Activated T-helper 1 cell treated with anti-CD3 and anti-CD28 coated beads, Interleukin-12 subunit alpha, Interleukin-12 subunit beta, Interleukin-2, Interleukin-4 antibody, amounts not matched to agents 30 ng/mL and 10 ng/mL and 1 ng/mL, durations not matched to agents 14 hours and 24 hours and 36 hours (primary cell): ENCODE measurements at regions of chr5 and their contacts with region 1.

Region 1: DNA sequence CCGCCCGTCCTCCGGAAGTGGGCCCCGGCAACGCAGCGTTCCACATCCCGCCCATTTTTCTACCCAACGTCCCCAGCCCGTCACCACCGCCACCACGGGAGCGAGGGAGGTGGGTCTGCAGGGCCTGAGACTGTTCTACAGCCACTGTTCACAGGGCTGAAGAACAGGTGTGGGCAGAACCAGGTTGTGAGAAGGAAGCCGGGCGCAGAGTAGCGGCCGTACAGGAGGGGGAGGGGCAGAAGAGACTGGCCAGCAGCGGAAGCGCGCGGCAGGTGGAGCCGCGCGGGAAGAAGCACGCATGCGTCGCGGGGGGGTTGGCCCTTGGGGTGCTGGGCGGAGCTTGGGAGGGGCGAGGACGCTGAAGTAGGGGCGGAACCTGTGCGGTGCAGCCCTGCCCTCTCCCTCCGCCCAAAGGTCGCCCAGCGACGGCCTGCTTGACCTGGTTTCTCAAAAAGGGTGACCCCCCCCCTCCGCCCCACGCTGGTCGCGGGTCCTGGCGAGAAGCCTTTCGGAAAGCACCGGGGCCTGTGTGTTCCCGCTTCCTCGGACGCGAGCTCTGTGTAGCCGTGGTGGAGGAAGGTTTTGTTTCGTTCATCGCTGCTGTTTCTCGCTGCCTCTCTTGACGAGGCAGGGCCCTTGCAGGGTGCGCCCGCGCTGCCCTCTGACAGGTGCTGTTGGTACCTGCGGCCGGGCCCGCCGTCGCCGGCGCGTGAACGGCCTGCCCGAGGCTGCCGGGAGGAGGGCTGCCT is 7.8 kb upstream of the MGAT1 start:
- DNase-seq: peak; percentile 91
- H3K4me3 Mint-ChIP-seq: peak overlapping the region; percentile 84
- H3K27ac Mint-ChIP-seq: peak overlapping the region; percentile 99
- H3K4me1 Mint-ChIP-seq: peaks cover 78% of the 10 kb centered on the region
- H3K27me3 Mint-ChIP-seq: peaks cover 2% of the 10 kb centered on the region

Region 2: GRCh38 chr5:180831139-180832048 is 21.0 kb after region 1 on chr5:
- intact Hi-C with region 1: loop called (anchors 1 kb)
- DNase-seq: peak; percentile 76
- H3K4me3 Mint-ChIP-seq: peak overlapping the region; percentile 91
- H3K27ac Mint-ChIP-seq: peak overlapping the region; percentile 99
- H3K4me1 Mint-ChIP-seq: peaks cover 33% of the 10 kb centered on the region
- H3K27me3 Mint-ChIP-seq: no peaks in the 10 kb centered on the region

Region 3: GRCh38 chr5:180860887-180861822 is 50.8 kb after region 1 on chr5 and contains the start of gene ZFP62:
- intact Hi-C with region 1: loop called (anchors 1 kb)
- DNase-seq: peak; percentile 82
- H3K4me3 Mint-ChIP-seq: peak within 1 kb of the TSS; percentile 90
- H3K27ac Mint-ChIP-seq: peak within 1 kb of the TSS; percentile 91
- H3K4me1 Mint-ChIP-seq: peaks cover 18% of the 10 kb centered on the region
- H3K27me3 Mint-ChIP-seq: peaks cover 4% of the 10 kb centered on the region
- total RNA-seq, gene ZFP62: 28.4 and 28.5 TPM in 2 replicates

Region 4: GRCh38 chr5:181181650-181182565 is 371.5 kb after region 1 on chr5:
- intact Hi-C with region 1: loop called (anchors 10 kb)
- DNase-seq: no peak
- H3K4me3 Mint-ChIP-seq: peak overlapping the region; percentile 63
- H3K27ac Mint-ChIP-seq: peak overlapping the region; percentile 64
- H3K4me1 Mint-ChIP-seq: peaks cover 22% of the 10 kb centered on the region
- H3K27me3 Mint-ChIP-seq: peaks cover 5% of the 10 kb centered on the region